ENCODE measurements at regions of chr6 and their contacts with region 1.

Region 1: GRCh38 chr6:137944793-137945498 is 77.9 kb downstream of the TNFAIP3 start:
- DNase-seq: no peak
- H3K4me3 ChIP-seq: peak overlapping the region in 1 of 8 donors; percentile 26
- H3K27ac ChIP-seq: peak overlapping the region in 2 of 8 donors; percentile 23 to 25
- H3K4me1 ChIP-seq: peaks cover 0 to 39% (median 14%) of the 10 kb centered on the region in 6 donors
- H3K27me3 ChIP-seq: no peaks in the 10 kb centered on the region
- CTCF ChIP-seq: peak; percentile 45 to 83 (median 78)
- POLR2A ChIP-seq: no peak

Region 2: DNA sequence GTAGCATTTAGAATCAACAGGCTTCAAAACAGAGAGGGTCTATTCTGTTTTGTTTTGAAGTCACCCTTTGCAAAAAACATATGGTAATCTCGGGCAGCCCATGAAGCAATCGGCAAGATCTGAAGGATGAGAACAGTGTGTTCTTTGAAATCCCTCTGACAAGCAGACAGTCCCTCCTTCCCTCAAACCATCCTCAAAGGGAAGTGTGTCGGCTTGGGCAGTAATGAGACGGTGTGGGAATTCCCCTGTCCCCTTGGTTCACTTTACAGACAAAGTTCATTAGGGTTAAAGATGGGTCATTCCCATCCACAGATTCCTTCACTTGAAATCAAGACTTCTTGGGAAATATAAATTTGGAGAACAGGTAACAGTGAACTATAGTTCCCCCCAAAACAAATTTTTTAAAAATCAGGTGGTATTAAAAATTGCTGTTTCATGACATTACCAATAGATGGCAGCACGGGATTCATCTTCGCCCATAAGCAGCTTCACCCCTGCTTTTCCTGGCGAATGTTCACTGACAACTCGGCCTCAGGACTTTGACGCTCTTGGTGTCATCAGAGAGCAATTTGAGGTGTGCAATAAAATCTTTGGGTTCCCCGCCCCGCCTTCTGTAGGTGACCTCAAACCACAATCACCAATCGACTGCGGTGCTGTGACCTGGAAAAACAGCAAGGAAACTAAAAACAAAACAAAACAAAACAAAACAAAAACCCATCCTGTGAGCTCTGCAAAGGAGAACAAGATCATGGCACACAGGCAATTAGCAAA is 237.2 kb before region 1 on chr6:
- intact Hi-C with region 1: loop called (anchors 5 kb)
- DNase-seq: peak; percentile 80
- H3K4me3 ChIP-seq: peak overlapping the region in 3 of 8 donors; percentile 8 to 36 (median 10)
- H3K27ac ChIP-seq: peak overlapping the region in 7 of 8 donors; percentile 9 to 77 (median 43)
- H3K4me1 ChIP-seq: peaks cover 12 to 56% (median 33%) of the 10 kb centered on the region in 6 donors
- H3K27me3 ChIP-seq: no peaks in the 10 kb centered on the region
- CTCF ChIP-seq: peak; percentile 41 to 88 (median 74)
- POLR2A ChIP-seq: no peak

Region 3: GRCh38 chr6:137866914-137867684 is 77.8 kb before region 1 on chr6 and contains the start of gene TNFAIP3:
- intact Hi-C with region 1: loop called (anchors 5 kb)
- DNase-seq: peak; percentile 98
- H3K4me3 ChIP-seq: peak within 1 kb of the TSS; percentile 83 to 97 (median 86)
- H3K27ac ChIP-seq: peak within 1 kb of the TSS; percentile 88 to 99 (median 97)
- H3K4me1 ChIP-seq: peaks cover 31 to 58% (median 48%) of the 10 kb centered on the region in 6 donors
- H3K27me3 ChIP-seq: no peaks in the 10 kb centered on the region
- CTCF ChIP-seq: peak; percentile 78 to 97 (median 93)
- POLR2A ChIP-seq: peak; percentile 80 to 96 (median 90)
- total RNA-seq, gene TNFAIP3: 41.1 to 133 (median 69.0) TPM

Region 4: DNA sequence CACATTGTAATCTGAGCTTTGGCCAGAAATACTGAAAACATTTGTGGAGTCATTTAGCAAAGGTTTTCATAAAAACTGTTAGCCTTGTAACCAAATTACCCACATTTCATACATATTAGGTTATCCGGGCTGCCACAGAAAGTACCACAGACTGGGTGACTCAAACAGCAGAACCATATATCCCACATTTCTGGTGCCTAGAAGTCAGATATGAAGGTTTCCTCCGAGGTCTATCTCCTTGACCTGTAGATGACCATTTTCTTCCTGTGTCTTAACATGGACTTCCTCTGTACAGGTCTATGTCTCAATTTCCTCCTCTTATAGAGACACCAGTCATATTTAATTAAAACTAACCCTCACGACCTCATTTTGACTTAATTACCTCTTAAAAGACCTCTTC is 383.3 kb after region 1 on chr6:
- intact Hi-C with region 1: no loop called
- DNase-seq: no peak
- H3K4me3 ChIP-seq: no peak overlapping the region
- H3K27ac ChIP-seq: no peak overlapping the region
- H3K4me1 ChIP-seq: no peaks in the 10 kb centered on the region
- H3K27me3 ChIP-seq: no peaks in the 10 kb centered on the region
- CTCF ChIP-seq: no peak
- POLR2A ChIP-seq: no peak

Region 5: DNA sequence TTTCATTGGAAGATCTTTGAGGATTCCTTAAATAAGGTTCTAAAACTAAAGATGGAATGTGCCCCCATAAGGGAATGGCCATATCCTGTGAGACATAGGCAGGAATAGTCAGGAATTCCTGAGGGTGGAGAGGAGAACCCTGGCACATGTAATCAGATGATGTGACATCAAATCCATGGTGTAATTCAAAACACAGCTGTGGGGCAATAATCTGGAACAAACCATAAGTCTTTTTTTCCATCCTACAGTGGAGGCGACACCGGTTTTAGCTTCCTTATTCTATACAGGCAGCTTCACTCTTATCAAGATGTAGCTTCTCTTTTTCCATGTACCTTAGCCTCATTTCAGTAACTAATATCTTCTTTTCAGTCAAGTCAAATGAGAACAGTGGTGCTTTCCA is 1563.1 kb after region 1 on chr6:
- intact Hi-C with region 1: no loop called
- DNase-seq: no peak
- H3K4me3 ChIP-seq: no peak overlapping the region
- H3K27ac ChIP-seq: no peak overlapping the region
- H3K4me1 ChIP-seq: no peaks in the 10 kb centered on the region
- H3K27me3 ChIP-seq: no peaks in the 10 kb centered on the region
- CTCF ChIP-seq: no peak
- POLR2A ChIP-seq: no peak

Measured in spleen (tissue), 13 donors.